ENCODE measurements at regions of chr2 and their contacts with region 1.

Region 1: DNA sequence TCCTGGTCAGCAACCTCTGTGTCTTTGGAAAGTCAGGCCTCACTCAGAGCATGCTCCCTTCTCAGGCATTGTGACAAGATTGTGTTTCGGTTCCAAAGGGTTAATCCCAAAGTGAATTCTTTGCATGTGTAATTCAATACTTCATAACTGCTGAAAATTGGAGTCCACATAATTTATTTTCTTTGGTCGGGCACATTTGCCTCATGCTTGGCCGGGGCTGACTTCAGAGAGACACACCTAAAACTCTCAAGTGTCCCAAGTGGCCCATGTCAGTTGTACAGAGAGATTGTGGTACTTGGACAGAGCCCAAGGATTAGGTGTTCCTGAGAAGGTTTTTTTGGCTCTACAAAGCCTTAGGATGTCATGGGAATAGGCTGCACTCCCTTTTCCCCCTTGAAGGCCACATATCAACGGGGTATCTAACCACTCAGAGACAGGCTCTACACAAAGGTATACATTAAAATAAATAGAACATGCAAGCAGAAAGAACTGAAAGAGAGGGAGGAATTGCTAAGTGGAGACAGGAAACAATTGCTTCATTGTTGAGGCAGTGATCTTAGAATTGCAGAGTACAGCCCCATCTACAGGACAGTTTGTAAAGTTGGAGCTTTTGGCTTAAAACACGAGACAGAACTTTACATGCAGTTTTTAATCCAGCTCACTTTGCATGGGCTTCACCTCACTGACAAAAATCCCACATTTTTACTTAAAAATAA is 1232.3 kb upstream of the ZEB2 start:
- DNase-seq: peak; percentile 34 to 83 (median 50)
- ATAC-seq: peak; percentile 81
- H3K4me3 ChIP-seq: no peak overlapping the region
- H3K27ac ChIP-seq: peak overlapping the region; percentile 68
- H3K4me1 ChIP-seq: peaks cover 22 to 56% of the 10 kb centered on the region in 2 experiments
- H3K27me3 ChIP-seq: no peaks in the 10 kb centered on the region
- CTCF ChIP-seq: peak; percentile 54 to 76 (median 70)
- EP300 ChIP-seq: peak; percentile 29; the same call in 1 of the 2 replicates
- POLR2A ChIP-seq: no peak
- RAD21 ChIP-seq: peak; percentile 82 to 89

Region 2: GRCh38 chr2:145484443-145485097 is 267.7 kb before region 1 on chr2:
- CTCF ChIA-PET with region 1: no interaction called
- POLR2A ChIA-PET with region 1: no interaction called
- in situ Hi-C with region 1: no loop called
- intact Hi-C with region 1: loop called (anchors 5 kb)
- DNase-seq: peak; percentile 10 to 37 (median 10)
- ATAC-seq: peak; percentile 79
- H3K4me3 ChIP-seq: no peak overlapping the region
- H3K27ac ChIP-seq: no peak overlapping the region
- H3K4me1 ChIP-seq: peaks cover 0 to 3% of the 10 kb centered on the region in 2 experiments; a peak in 1 of 5 replicates
- H3K27me3 ChIP-seq: no peaks in the 10 kb centered on the region
- CTCF ChIP-seq: peak in 1 of 3 experiments; percentile 38; a peak in 1 of 6 replicates
- EP300 ChIP-seq: no peak
- POLR2A ChIP-seq: no peak
- RAD21 ChIP-seq: peak; percentile 33 to 60; a peak in 3 of 4 replicates

Region 3: DNA sequence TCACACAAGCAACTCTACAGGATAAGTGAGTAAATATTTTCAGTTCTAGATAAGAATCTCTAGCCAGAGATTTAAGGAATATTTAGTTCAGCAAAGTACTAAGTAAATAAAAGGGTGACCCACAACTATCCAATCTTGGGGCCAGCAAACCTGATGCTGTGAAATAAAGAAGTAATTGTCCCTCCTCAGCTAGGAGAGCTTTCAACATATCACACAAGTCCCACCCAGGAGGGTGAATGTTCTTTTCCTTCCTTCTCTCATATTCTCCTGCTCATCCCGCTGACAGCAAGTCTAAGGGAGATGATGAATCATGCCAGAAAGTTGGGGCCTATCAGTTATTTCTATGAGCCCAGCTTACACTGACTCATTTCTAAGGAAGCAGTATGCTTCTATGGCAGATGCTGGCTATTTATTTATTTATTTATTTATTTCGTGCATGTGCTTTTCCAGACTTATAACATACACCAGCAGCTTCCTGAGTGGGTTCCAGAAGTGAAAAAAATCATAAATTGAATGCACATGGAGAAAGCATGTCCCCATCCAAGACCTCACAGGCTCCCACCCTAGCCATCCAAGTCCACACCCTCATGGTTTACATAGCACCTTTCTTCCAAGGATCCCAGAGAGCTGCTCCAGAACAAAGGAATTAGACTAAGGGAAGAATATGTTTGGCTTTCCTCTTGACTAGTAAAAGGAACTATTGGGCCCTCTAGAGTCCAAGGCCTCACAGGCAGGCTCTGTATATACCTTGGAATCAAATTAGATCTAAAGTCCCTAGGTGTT is 158.2 kb before region 1 on chr2:
- CTCF ChIA-PET with region 1: no interaction called
- POLR2A ChIA-PET with region 1: no interaction called
- in situ Hi-C with region 1: no loop called
- intact Hi-C with region 1: loop called (anchors 5 kb)
- DNase-seq: peak; percentile 24 to 58 (median 40)
- ATAC-seq: peak; percentile 73
- H3K4me3 ChIP-seq: no peak overlapping the region
- H3K27ac ChIP-seq: no peak overlapping the region
- H3K4me1 ChIP-seq: peaks cover 0 to 2% of the 10 kb centered on the region in 2 experiments; a peak in 2 of 5 replicates
- H3K27me3 ChIP-seq: no peaks in the 10 kb centered on the region
- CTCF ChIP-seq: no peak
- EP300 ChIP-seq: peak; percentile 20; the same call in 1 of the 2 replicates
- POLR2A ChIP-seq: no peak
- RAD21 ChIP-seq: peak in 1 of 2 experiments; percentile 27; a peak in 2 of 4 replicates

Region 4: GRCh38 chr2:145644820-145645302 is 107.4 kb before region 1 on chr2:
- CTCF ChIA-PET with region 1: no interaction called
- POLR2A ChIA-PET with region 1: no interaction called
- in situ Hi-C with region 1: no loop called
- intact Hi-C with region 1: no loop called
- DNase-seq: no peak
- ATAC-seq: no peak
- H3K4me3 ChIP-seq: no peak overlapping the region
- H3K27ac ChIP-seq: no peak overlapping the region
- H3K4me1 ChIP-seq: no peaks in the 10 kb centered on the region
- H3K27me3 ChIP-seq: no peaks in the 10 kb centered on the region
- CTCF ChIP-seq: no peak
- EP300 ChIP-seq: no peak
- POLR2A ChIP-seq: no peak
- RAD21 ChIP-seq: no peak

Region 5: DNA sequence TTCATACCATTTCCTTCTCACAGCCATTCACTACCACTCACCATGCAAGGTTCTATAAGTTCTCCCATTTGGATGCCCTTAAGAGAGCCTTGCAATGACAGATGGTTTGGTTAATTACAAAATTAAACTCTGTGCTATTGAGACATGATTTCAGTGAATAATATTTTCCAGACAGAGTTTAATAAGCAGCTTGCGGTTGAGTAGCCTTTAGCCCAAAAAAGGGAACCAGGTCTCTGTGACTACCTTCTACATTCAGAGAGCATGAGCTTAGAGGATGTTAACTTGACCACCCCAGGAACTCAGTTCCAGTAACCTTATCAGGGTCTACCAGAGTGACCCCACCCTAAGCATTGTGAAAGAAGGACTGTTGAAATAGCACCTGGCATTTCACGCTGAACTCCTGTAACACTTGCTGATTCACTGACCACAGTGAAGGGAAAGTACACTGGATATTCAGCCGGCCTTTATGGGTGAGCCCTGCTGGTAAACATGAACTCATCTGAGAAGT is 59.2 kb before region 1 on chr2:
- CTCF ChIA-PET with region 1: no interaction called
- POLR2A ChIA-PET with region 1: interaction called, 3 read pairs
- in situ Hi-C with region 1: no loop called
- intact Hi-C with region 1: loop called (anchors 1 kb)
- DNase-seq: peak; percentile 65 to 97 (median 80)
- ATAC-seq: peak; percentile 98
- H3K4me3 ChIP-seq: no peak overlapping the region
- H3K27ac ChIP-seq: peak overlapping the region; percentile 82
- H3K4me1 ChIP-seq: peaks cover 0 to 19% of the 10 kb centered on the region in 2 experiments; a peak in 3 of 5 replicates
- H3K27me3 ChIP-seq: no peaks in the 10 kb centered on the region
- CTCF ChIP-seq: no peak
- EP300 ChIP-seq: peak; percentile 99
- POLR2A ChIP-seq: 0 out of 2 replicates have a peak, but pooled peaks have one; percentile 36
- RAD21 ChIP-seq: peak; percentile 8 to 53; a peak in 3 of 4 replicates

Region 6: DNA sequence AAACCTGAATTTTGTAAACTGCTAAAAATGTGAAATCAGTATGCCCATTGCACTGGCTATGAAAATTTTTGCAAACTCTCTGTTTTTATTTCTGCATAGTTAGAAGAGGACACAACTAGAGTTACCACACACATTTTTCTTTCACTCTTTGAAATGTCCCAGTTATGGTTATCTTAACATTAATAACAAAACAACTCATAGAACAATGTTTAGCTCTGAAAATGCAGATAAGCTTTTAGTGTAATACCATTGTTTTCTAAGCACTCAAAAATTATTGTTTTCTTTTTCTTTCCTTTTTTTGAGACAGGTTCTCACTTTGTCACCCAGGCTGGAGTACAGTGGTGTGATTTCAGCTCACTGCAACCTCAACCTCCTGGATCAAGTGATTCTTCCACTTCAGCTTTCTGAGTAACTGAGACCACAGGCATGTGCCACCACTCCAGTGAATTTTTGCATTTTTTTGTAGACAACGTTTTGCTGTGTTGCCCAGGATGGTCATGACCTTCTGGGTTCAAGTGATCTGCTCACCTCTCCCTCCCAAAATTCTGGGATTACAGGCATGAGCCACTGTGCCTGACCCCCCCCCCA is 27.8 kb before region 1 on chr2:
- CTCF ChIA-PET with region 1: no interaction called
- POLR2A ChIA-PET with region 1: no interaction called
- in situ Hi-C with region 1: no loop called
- intact Hi-C with region 1: loop called (anchors 2 kb)
- DNase-seq: no peak
- ATAC-seq: peak; percentile 45
- H3K4me3 ChIP-seq: no peak overlapping the region
- H3K27ac ChIP-seq: peak overlapping the region; percentile 78
- H3K4me1 ChIP-seq: peaks cover 5 to 20% of the 10 kb centered on the region in 2 experiments; a peak in 4 of 5 replicates
- H3K27me3 ChIP-seq: no peaks in the 10 kb centered on the region
- CTCF ChIP-seq: no peak
- EP300 ChIP-seq: no peak
- POLR2A ChIP-seq: no peak
- RAD21 ChIP-seq: no peak

Region 7: DNA sequence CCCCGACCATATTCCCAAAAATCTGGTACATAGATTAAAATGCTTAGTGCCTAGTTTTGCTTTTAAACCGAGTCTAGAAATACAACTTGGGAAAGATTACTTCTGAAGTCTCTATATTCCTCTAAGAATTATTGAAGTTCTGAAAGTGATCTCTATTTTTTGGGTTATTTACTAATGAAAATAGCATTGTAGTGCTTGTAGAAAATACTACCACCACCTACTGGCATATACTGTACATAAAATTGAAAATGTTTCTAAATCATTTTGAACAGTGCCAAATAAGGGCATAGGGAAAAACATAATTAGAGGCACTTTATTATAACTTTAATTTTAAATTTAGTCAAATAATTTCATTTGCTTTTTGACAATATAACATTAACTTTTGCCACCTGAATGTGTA is 167.2 kb after region 1 on chr2:
- CTCF ChIA-PET with region 1: no interaction called
- POLR2A ChIA-PET with region 1: no interaction called
- in situ Hi-C with region 1: no loop called
- intact Hi-C with region 1: loop called (anchors 10 kb)
- DNase-seq: no peak
- ATAC-seq: no peak
- H3K4me3 ChIP-seq: no peak overlapping the region
- H3K27ac ChIP-seq: no peak overlapping the region
- H3K4me1 ChIP-seq: no peaks in the 10 kb centered on the region
- H3K27me3 ChIP-seq: no peaks in the 10 kb centered on the region
- CTCF ChIP-seq: peak in 1 of 3 experiments; percentile 24; a peak in 1 of 6 replicates
- EP300 ChIP-seq: no peak
- POLR2A ChIP-seq: no peak
- RAD21 ChIP-seq: peak; percentile 12 to 33; a peak in 2 of 4 replicates

Measured in K562 (cell line).